Activated naive CD4-positive, alpha-beta T cell treated with anti-CD3 and anti-CD28 coated beads for 36 hours (primary cell): ENCODE measurements at regions of chr1 and their contacts with region 1.

Region 1: DNA sequence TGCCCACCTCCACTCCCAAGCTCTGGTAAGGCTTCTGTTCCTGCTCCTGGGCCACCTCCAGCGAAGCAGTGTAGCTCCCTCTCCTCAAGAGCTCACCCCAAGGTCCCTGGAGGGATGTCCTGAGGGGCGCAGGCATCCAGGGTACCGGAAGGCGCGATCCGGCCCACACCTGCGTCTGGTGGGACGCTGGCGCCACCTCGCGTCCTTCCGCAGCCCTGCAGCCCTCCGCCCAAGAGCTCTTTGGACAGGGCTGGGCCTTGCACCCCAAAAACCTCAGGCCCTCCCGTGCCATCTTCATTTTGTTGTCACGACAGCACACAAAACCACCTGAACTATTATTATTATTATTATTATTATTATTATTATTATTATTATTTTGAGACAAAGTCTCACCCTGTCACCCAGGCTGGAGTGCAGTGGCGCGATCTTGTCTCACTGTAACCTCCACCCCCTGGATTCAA is 49.2 kb upstream of the PAX7 start:
- DNase-seq: peak; percentile 60
- H3K4me3 Mint-ChIP-seq: no peak overlapping the region
- H3K27ac Mint-ChIP-seq: no peak overlapping the region
- H3K4me1 Mint-ChIP-seq: no peaks in the 10 kb centered on the region
- H3K27me3 Mint-ChIP-seq: peaks cover 9% of the 10 kb centered on the region

Region 2: GRCh38 chr1:18299441-18300338 is 281.8 kb before region 1 on chr1:
- CTCF ChIA-PET with region 1: interaction called, 5 read pairs
- intact Hi-C with region 1: loop called (anchors 5 kb)
- DNase-seq: peak; percentile 22
- H3K4me3 Mint-ChIP-seq: no peak overlapping the region
- H3K27ac Mint-ChIP-seq: no peak overlapping the region
- H3K4me1 Mint-ChIP-seq: no peaks in the 10 kb centered on the region
- H3K27me3 Mint-ChIP-seq: peaks cover 36% of the 10 kb centered on the region

Region 3: DNA sequence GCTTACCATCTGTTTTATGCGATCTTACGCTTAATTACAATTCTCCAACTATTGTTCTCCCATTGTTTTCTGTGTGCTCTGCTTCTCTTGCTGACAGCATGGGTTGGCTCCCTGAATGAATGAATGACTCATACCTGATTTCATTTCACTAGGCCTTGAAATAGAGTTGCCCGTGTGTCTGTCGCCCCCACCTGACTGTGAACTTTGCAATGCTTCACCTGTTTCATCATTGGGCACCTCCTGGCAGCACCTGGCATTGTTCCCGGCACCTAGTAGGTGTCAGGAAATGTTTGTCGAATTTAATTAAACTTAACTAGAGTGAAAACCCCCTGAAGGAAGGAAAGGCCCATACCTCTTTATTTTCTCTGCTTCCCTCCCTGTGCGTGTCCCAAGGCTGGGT is 221.2 kb before region 1 on chr1:
- CTCF ChIA-PET with region 1: no interaction called
- intact Hi-C with region 1: no loop called
- DNase-seq: no peak
- H3K4me3 Mint-ChIP-seq: no peak overlapping the region
- H3K27ac Mint-ChIP-seq: no peak overlapping the region
- H3K4me1 Mint-ChIP-seq: no peaks in the 10 kb centered on the region
- H3K27me3 Mint-ChIP-seq: peaks cover 31% of the 10 kb centered on the region

Region 4: DNA sequence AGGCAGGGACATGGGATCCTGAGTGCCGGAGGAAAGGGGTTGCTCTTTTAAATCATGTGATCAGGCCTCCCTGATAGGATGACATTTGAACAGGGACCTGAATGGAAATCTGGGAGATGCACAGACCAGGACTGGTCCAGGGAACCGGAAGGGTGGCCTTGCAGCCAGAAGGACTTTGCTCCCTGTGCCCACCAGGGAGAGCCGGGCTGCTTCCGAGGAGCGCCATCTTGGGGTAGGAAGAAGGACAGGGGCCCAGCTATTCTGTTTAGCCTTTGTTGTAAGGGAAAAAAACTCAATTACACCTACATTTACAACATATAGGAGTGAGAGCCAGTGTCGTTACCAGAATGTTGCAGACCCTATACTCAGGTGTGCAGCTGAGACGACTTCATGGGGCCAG is 95.3 kb before region 1 on chr1:
- CTCF ChIA-PET with region 1: no interaction called
- intact Hi-C with region 1: no loop called
- DNase-seq: no peak
- H3K4me3 Mint-ChIP-seq: no peak overlapping the region
- H3K27ac Mint-ChIP-seq: no peak overlapping the region
- H3K4me1 Mint-ChIP-seq: no peaks in the 10 kb centered on the region
- H3K27me3 Mint-ChIP-seq: peaks cover 7% of the 10 kb centered on the region

Region 5: DNA sequence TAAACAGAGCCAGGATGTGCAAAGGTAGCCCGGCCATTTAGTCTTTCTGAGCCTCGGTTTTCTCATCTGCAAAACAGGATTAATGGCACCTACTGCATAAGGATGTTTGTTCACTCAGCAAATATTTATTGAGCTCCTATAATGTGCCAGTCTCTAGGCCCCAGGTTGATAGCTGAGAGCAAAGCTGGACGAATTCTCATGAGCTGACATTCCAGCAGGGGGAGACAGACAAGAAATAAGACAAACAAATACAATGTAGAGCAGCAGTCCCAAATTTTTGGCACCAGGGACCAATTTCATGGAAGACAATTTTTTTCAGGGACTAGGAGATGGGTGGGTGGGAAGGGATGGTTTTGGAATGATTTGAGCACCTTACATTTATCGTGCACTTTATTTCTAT is 25.1 kb before region 1 on chr1:
- CTCF ChIA-PET with region 1: interaction called, 19 read pairs
- intact Hi-C with region 1: no loop called
- DNase-seq: no peak
- H3K4me3 Mint-ChIP-seq: no peak overlapping the region
- H3K27ac Mint-ChIP-seq: no peak overlapping the region
- H3K4me1 Mint-ChIP-seq: peaks cover 11% of the 10 kb centered on the region
- H3K27me3 Mint-ChIP-seq: peaks cover 33% of the 10 kb centered on the region

Region 6: DNA sequence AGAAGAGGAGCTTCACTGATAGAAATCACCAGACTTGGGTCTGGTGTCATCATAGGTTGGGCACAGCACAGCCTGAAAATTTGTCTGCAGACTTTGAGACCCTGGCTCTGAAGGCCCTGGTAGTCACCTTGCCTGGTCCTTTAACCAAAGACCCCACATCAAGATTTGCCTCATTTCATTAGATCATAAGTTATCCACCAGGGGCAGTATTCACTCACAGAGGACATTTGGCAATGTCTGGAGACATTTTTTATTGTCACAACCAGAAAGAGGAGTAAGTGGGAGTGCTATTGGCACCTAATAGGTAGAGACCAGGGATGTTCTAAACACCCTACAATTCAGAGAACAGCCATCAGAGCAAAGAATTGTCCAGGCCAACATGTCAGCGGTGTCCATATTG is 27.1 kb after region 1 on chr1:
- CTCF ChIA-PET with region 1: no interaction called
- intact Hi-C with region 1: no loop called
- DNase-seq: no peak
- H3K4me3 Mint-ChIP-seq: no peak overlapping the region
- H3K27ac Mint-ChIP-seq: no peak overlapping the region
- H3K4me1 Mint-ChIP-seq: no peaks in the 10 kb centered on the region
- H3K27me3 Mint-ChIP-seq: peaks cover 8% of the 10 kb centered on the region